Panc1 (cell line): ENCODE measurements at regions of chr12 and their contacts with region 1.

Region 1: DNA sequence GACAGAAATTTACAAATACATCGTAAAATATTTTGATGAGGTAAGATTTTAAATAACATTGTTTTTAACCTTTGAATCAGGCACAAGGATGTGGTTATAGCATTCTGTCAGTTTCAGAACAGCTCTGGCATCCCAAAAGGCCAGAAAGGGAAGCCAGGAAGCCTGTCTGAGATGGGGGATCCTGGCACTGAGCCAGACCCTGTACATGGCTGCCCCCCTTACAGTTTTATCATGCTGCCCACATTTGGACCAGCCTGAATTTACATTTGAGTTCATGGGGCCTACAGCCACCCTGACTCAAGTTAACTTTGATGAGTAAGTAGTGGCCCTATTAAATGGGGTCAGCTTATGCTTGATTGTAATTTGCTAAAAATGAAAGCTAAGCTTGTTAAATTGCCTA is 155.6 kb downstream of the PLXNC1 start:
- DNase-seq: no peak
- ATAC-seq: no peak
- H3K4me3 ChIP-seq: no peak overlapping the region
- H3K27ac ChIP-seq: no peak overlapping the region
- H3K4me1 ChIP-seq: no peaks in the 10 kb centered on the region
- H3K27me3 ChIP-seq: no peaks in the 10 kb centered on the region
- CTCF ChIP-seq: no peak

Region 2: DNA sequence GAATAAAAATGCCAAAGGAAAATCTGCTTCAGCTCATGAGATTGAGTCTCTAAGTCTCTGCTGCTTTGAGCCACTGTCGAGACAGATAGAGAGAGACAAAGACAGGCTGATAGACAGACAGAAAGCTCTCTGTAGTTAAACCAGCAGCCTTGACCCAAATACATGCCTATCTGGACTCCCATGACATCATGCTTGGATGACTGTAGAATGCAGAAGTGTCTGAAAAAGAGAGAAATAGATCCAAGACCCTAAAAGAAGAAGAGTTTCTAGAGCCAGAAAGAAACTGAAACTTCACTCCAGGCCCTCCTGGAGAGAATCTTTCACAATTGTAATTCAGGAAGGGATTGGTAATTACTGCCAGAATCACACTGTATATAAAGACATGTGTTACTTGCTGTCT is 278.3 kb before region 1 on chr12:
- CTCF ChIA-PET with region 1: interaction called, 12 read pairs
- POLR2A ChIA-PET with region 1: no interaction called
- in situ Hi-C with region 1: no loop called
- intact Hi-C with region 1: no loop called
- DNase-seq: no peak
- ATAC-seq: no peak
- H3K4me3 ChIP-seq: no peak overlapping the region
- H3K27ac ChIP-seq: no peak overlapping the region
- H3K4me1 ChIP-seq: no peaks in the 10 kb centered on the region
- H3K27me3 ChIP-seq: no peaks in the 10 kb centered on the region
- CTCF ChIP-seq: no peak